ENCODE measurements at regions of chr20 and their contacts with region 1.

Region 1: DNA sequence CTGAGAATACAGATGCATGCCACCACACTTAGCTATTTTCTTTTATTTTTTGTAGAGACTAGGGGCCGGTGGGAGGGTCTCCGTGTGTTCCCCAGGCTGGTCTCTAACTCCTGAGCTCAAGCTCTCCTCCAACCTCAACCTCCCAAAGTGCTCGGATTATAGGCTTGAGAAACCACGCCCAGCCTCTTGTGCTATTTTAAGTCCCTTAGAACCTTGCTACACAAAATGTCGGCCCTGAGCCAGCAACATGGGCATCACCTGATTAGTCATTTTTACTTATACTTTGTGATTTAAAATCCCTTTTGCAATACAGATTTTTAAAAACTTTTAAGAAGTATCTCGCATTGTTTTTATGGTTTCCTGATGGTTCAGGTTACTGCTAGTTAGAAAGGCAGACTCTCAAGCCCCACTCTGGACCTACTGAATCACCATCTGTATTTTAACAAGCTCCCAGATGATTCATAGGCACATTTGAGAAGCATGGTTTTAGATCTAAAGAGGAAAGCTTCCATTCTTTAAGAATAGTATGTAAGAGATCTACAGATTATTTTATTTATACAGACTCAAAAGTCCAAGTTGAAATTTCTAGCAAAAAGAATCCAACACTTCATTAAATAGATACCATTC is 186.3 kb downstream of the PTPRT start:
- DNase-seq: no peak
- ATAC-seq: no peak
- H3K4me3 ChIP-seq: no peak overlapping the region
- H3K27ac ChIP-seq: no peak overlapping the region
- H3K4me1 ChIP-seq: no peaks in the 10 kb centered on the region
- H3K27me3 ChIP-seq: peaks cover 0 to 6% (median 0%) of the 10 kb centered on the region in 7 donors
- CTCF ChIP-seq: no peak

Region 2: GRCh38 chr20:43068482-43068881 is 65.1 kb after region 1 on chr20:
- intact Hi-C with region 1: loop called in 1 of 10 experiments (anchors 10 kb)
- DNase-seq: no peak
- ATAC-seq: no peak
- H3K4me3 ChIP-seq: no peak overlapping the region
- H3K27ac ChIP-seq: no peak overlapping the region
- H3K4me1 ChIP-seq: no peaks in the 10 kb centered on the region
- H3K27me3 ChIP-seq: no peaks in the 10 kb centered on the region
- CTCF ChIP-seq: no peak